ENCODE measurements at regions of chr13 and their contacts with region 1.

Region 1: DNA sequence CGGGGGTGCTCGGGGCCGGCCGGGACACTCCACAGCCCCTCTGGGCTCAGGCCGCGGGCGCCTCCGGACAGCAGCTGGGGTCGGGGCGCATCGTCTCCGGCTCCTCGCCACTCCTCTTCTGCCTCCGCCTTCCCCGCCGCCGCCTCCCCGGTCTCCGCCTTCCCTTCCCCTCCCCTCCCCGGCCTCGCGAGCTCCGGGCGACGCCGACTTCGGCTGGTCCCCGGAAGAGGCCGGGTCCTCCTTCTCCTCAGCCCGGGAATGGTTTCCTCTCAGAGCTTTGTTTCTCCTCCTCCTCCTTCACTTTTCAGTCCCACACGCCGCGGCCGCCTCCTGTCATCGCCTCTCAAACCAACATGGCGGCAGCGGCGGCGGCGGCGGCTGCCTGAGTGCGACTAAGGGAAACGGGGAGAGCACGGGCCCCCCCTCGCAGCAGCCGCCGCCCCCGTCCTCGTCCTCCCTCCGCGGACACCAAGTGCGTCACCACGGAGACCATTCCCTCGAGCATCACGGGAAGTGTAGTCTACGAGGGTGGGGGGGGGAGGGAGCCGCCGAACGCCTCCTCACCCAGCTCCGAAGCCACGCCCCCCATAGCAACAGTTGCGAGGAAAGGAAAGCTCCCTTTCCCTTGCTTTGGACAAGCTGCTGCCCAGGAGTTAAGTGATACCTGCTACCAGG is at the start of gene UBL3:
- DNase-seq: peak; percentile 97
- H3K4me3 Mint-ChIP-seq: peak within 1 kb of the TSS; percentile 97
- H3K27ac Mint-ChIP-seq: peak within 1 kb of the TSS; percentile 100
- H3K4me1 Mint-ChIP-seq: peaks cover 43% of the 10 kb centered on the region
- H3K27me3 Mint-ChIP-seq: no peaks in the 10 kb centered on the region
- total RNA-seq, gene UBL3: 9.5 and 10.1 TPM in 2 replicates

Region 2: DNA sequence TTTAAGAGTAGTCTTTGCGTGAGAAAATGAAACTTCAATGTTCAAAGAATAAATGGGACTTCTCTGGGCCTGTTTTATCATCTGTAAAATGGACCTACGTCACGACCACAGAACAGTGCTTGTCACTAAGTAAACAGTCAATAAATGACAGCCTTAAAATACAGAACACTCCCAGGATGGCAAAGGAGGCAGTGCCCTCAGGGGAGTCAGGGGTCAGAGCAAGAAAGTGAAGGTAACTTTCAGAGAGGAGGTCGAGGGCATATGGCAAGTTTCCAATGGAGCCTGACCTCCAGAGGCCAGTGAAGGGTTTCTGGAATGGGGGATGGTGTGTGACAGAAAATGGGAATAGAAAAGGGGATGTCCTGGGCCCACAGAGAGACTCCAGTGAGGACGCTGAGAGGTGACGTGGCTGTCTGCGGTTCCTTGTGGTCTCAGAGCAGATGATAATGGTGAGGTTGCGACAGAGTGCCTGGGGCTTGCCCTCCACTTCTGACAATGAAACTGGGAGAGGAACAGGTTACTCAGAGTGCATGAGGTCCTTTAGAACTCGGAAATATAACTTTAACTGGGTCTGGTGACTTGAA is 91.7 kb before region 1 on chr13:
- intact Hi-C with region 1: loop called (anchors 5 kb)
- DNase-seq: peak; percentile 79
- H3K4me3 Mint-ChIP-seq: peak overlapping the region; percentile 19
- H3K27ac Mint-ChIP-seq: peak overlapping the region; percentile 70
- H3K4me1 Mint-ChIP-seq: peaks cover 16% of the 10 kb centered on the region
- H3K27me3 Mint-ChIP-seq: no peaks in the 10 kb centered on the region

Region 3: GRCh38 chr13:29830000-29830399 is 20.4 kb before region 1 on chr13:
- intact Hi-C with region 1: loop called (anchors 2 kb)
- DNase-seq: peak; percentile 34
- H3K4me3 Mint-ChIP-seq: no peak overlapping the region
- H3K27ac Mint-ChIP-seq: no peak overlapping the region
- H3K4me1 Mint-ChIP-seq: peaks cover 8% of the 10 kb centered on the region
- H3K27me3 Mint-ChIP-seq: no peaks in the 10 kb centered on the region

Region 4: DNA sequence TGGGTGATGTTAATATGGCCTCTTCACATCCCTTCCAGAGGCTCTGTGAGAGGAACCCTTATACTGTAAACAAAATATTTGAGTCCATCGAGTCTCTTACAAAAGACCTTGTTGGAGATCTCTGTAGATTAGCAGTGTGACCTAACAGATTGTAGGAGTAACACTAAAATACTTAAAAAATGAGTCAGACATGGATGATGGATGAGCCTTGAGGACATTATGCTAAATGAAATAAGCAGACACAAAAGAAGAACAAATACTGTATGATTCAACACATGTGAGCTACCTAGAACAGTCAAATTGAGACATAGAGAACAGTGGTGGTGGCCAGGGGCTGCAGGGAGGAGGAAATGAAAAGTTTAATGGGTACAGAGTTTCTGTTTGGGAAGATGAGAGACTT is 152.2 kb after region 1 on chr13:
- intact Hi-C with region 1: loop called (anchors 10 kb)
- DNase-seq: no peak
- H3K4me3 Mint-ChIP-seq: no peak overlapping the region
- H3K27ac Mint-ChIP-seq: no peak overlapping the region
- H3K4me1 Mint-ChIP-seq: peaks cover 29% of the 10 kb centered on the region
- H3K27me3 Mint-ChIP-seq: no peaks in the 10 kb centered on the region

Region 5: GRCh38 chr13:30026093-30026492 is 175.7 kb after region 1 on chr13:
- intact Hi-C with region 1: no loop called
- DNase-seq: no peak
- H3K4me3 Mint-ChIP-seq: no peak overlapping the region
- H3K27ac Mint-ChIP-seq: no peak overlapping the region
- H3K4me1 Mint-ChIP-seq: no peaks in the 10 kb centered on the region
- H3K27me3 Mint-ChIP-seq: peaks cover 3% of the 10 kb centered on the region

Region 6: GRCh38 chr13:30114571-30115256 is 264.4 kb after region 1 on chr13:
- intact Hi-C with region 1: loop called (anchors 1 kb)
- DNase-seq: peak; percentile 98
- H3K4me3 Mint-ChIP-seq: peak overlapping the region; percentile 80
- H3K27ac Mint-ChIP-seq: peak overlapping the region; percentile 73
- H3K4me1 Mint-ChIP-seq: peaks cover 37% of the 10 kb centered on the region
- H3K27me3 Mint-ChIP-seq: peaks cover 9% of the 10 kb centered on the region

Measured in activated CD4-positive, alpha-beta T cell treated with anti-CD3 and anti-CD28 coated beads, Interleukin-2, amount 10 ng/mL, durations not matched to agents 24 days and 14 days (primary cell).